PC-9 (cell line): ENCODE measurements at regions of chr13 and their contacts with region 1.

Region 1: DNA sequence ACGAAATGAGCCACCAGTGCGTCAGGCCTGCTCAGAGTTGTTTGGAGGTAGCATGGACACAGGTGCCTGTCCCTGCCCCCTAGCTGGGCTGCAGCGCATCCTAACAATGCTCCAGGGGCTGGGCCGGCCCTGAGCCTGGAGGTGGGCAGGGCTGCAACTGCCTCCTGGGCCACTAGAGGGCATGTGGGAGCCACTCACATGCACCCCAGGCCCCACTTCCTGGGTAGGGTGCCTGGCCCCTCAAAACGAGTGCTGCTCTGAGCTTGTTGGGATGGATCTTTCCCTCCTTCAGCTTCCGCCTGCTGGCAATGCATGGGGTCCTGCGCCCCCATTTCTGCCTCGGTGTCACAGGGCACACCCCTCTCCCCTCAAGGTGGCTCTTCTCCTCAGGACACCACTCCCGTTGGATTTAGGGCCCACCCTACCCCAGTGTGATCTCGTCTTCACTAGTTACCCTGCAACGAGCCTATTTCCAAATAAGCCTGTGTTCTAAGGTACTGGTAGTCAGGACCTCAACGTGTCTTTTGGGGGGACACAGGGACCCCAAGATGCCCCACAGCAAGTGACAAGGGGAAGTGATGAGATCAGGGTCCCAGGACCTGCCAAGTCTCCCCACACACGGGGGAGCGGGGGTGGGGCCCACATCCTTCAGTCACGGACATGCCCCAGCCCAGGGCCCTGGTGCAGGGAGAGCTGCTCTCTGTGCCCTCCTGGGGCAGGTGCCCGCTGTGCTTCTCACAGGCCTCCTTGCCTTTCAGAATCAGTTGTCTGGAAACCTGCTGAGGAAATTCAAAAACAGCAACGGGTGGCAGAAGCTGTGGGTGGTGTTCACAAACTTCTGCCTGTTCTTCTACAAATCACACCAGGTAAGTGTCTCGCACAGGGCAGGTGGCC is 131.3 kb downstream of the STK24 start:
- DNase-seq: peak; percentile 76 to 77
- H3K4me3 ChIP-seq: no peak overlapping the region
- H3K27ac ChIP-seq: no peak overlapping the region; the same call in 1 of the 2 replicates
- H3K4me1 ChIP-seq: peaks cover 4% of the 10 kb centered on the region; the same call in 1 of the 2 replicates
- H3K27me3 ChIP-seq: no peaks in the 10 kb centered on the region
- CTCF ChIP-seq: peak; percentile 96

Region 2: DNA sequence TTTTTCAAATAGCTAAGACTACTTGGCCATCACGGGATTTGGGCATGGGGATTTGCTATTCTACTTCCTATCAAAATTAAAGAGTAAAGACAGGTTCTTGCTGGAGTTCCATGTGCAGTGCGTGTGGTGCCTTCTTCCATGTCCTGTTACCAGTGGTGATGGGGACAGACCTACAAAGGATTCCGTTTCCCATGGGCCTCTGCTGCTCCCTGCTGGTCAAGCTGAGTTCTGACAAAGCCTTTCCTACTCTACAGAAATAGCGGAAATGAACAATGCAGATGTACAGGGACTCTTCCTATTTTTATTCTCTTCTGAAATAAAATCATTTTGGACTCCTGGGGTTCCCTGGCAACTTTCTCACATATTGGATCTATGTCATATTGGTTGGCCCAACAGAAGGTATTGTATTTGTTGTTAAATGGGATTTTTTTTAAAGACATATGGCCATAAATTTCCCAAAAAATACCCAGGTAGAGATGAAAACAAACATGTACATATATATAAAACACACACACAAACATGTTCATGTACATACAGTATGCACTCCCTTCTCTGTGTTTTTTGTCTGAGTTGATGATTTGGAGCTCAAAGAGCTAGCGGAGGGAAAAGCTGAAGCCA is 397.4 kb after region 1 on chr13:
- CTCF ChIA-PET with region 1: interaction called, 3 read pairs
- POLR2A ChIA-PET with region 1: no interaction called
- intact Hi-C with region 1: loop called (anchors 10 kb)
- DNase-seq: peak; percentile 59 to 62
- H3K4me3 ChIP-seq: no peak overlapping the region
- H3K27ac ChIP-seq: no peak overlapping the region
- H3K4me1 ChIP-seq: no peaks in the 10 kb centered on the region
- H3K27me3 ChIP-seq: no peaks in the 10 kb centered on the region
- CTCF ChIP-seq: peak; percentile 93